ENCODE measurements at regions of chr1 and their contacts with region 1.

Region 1: DNA sequence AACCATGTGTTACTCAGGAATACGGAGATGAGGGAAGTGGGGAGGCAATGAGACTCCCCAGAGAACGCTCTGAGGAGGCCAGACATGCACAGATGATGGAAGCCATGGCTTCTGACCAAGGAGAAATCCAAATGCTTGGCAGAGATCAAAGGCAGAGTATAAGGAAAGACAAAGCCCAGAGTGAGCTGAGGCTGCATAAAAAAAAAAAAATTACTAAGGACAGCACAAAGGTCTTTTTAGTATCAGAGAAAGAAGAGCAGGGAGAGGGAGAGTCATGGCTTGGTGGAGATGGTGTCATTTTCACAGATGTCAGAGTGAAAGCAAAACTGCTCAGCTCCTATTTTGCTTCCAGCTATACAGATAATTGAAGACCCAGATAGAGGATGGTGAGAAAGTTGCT is 8.1 kb upstream of the NCF2 start:
- DNase-seq: no peak
- H3K4me3 ChIP-seq: no peak overlapping the region
- H3K27ac ChIP-seq: peak overlapping the region; percentile 25 to 31; a peak in 2 of 4 replicates
- H3K4me1 ChIP-seq: peaks cover 3 to 6% of the 10 kb centered on the region in 2 experiments; a peak in 1 of 4 replicates
- H3K27me3 ChIP-seq: no peaks in the 10 kb centered on the region
- CTCF ChIP-seq: no peak
- EP300 ChIP-seq: no peak
- RAD21 ChIP-seq: no peak

Region 2: GRCh38 chr1:183537405-183537804 is 61.0 kb before region 1 on chr1:
- CTCF ChIA-PET with region 1: no interaction called
- POLR2A ChIA-PET with region 1: no interaction called
- DNase-seq: no peak
- H3K4me3 ChIP-seq: no peak overlapping the region
- H3K27ac ChIP-seq: no peak overlapping the region
- H3K4me1 ChIP-seq: no peaks in the 10 kb centered on the region; a peak in 1 of 4 replicates
- H3K27me3 ChIP-seq: no peaks in the 10 kb centered on the region
- CTCF ChIP-seq: no peak
- EP300 ChIP-seq: no peak
- RAD21 ChIP-seq: no peak

Region 3: GRCh38 chr1:183609313-183609712 is 10.9 kb after region 1 on chr1:
- CTCF ChIA-PET with region 1: interaction called, 19 read pairs
- POLR2A ChIA-PET with region 1: no interaction called
- DNase-seq: peak; percentile 49
- H3K4me3 ChIP-seq: peak overlapping the region; percentile 23 to 40; a peak in 3 of 4 replicates
- H3K27ac ChIP-seq: peak overlapping the region; percentile 94 to 98
- H3K4me1 ChIP-seq: peaks cover 15 to 20% of the 10 kb centered on the region in 2 experiments
- H3K27me3 ChIP-seq: no peaks in the 10 kb centered on the region
- CTCF ChIP-seq: peak; percentile 80
- EP300 ChIP-seq: peak; percentile 51 to 61; a peak in 3 of 4 replicates
- RAD21 ChIP-seq: peak; percentile 71

Measured in SK-N-SH (cell line).